SK-N-SH (cell line): ENCODE measurements at regions of chr6 and their contacts with region 1.

Region 1: DNA sequence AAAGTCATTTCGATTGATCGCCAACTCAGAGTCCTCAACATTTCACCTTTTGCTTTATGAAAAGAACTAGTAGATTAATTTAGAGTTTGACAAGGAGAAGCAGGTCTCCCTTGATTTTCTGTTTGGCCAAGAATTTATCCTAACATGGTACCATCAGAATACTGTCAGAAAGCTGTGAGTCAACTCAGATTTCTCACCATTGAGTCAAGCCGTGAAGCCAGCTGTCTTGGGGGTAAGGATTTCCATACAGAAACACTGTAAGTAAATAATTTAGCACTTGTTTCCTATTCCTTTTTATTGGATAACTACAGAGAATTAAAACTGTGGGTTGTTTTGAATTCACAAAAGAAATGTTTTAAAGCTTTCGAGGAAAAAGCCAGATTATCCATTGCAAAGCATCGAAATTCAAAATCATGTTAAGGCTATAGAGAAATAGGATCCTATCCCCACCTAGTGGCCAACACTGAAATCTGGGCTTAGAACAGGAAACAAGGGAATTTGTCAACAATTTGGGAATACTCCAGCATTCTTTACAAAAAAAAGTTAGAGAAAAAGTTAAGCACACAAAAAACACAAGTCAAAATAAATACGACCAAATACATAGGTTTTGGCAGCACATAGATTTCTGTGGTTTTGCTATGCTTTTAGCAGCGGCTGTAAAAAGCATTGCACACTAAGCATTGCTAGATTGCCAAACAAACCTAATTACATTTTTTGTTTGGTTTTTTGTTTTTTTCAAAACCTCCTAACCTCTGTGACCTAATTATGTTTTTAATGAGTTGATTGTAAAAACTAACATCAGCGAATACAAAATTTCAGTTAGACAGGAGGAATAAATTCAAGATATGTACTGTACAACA is 44.2 kb downstream of the COL11A2 start:
- DNase-seq: peak; percentile 63
- H3K4me3 ChIP-seq: no peak overlapping the region
- H3K27ac ChIP-seq: no peak overlapping the region
- H3K4me1 ChIP-seq: no peaks in the 10 kb centered on the region
- H3K27me3 ChIP-seq: peaks cover 30% of the 10 kb centered on the region
- CTCF ChIP-seq: peak; percentile 92
- EP300 ChIP-seq: no peak
- RAD21 ChIP-seq: peak; percentile 77

Region 2: GRCh38 chr6:33014841-33015634 is 133.0 kb before region 1 on chr6:
- CTCF ChIA-PET with region 1: interaction called, 65 read pairs
- POLR2A ChIA-PET with region 1: no interaction called
- DNase-seq: peak; percentile 71
- H3K4me3 ChIP-seq: no peak overlapping the region; a peak in 1 of 4 replicates
- H3K27ac ChIP-seq: no peak overlapping the region
- H3K4me1 ChIP-seq: no peaks in the 10 kb centered on the region; a peak in 1 of 4 replicates
- H3K27me3 ChIP-seq: peaks cover 72% of the 10 kb centered on the region
- CTCF ChIP-seq: peak; percentile 75
- EP300 ChIP-seq: no peak
- RAD21 ChIP-seq: peak; percentile 78

Region 3: GRCh38 chr6:33118525-33119123 is 29.4 kb before region 1 on chr6:
- CTCF ChIA-PET with region 1: interaction called, 68 read pairs
- POLR2A ChIA-PET with region 1: no interaction called
- DNase-seq: peak; percentile 46
- H3K4me3 ChIP-seq: peak overlapping the region in 1 of 2 experiments; percentile 43; a peak in 1 of 4 replicates
- H3K27ac ChIP-seq: no peak overlapping the region
- H3K4me1 ChIP-seq: no peaks in the 10 kb centered on the region; a peak in 1 of 4 replicates
- H3K27me3 ChIP-seq: peaks cover 42% of the 10 kb centered on the region; the same call in 1 of the 2 replicates
- CTCF ChIP-seq: peak; percentile 88
- EP300 ChIP-seq: no peak
- RAD21 ChIP-seq: peak; percentile 68

Region 4: GRCh38 chr6:33126101-33126714 is 21.8 kb before region 1 on chr6:
- CTCF ChIA-PET with region 1: interaction called, 68 read pairs
- POLR2A ChIA-PET with region 1: no interaction called
- DNase-seq: peak; percentile 51
- H3K4me3 ChIP-seq: no peak overlapping the region; a peak in 1 of 4 replicates
- H3K27ac ChIP-seq: no peak overlapping the region
- H3K4me1 ChIP-seq: no peaks in the 10 kb centered on the region
- H3K27me3 ChIP-seq: peaks cover 39% of the 10 kb centered on the region; the same call in 1 of the 2 replicates
- CTCF ChIP-seq: peak; percentile 56
- EP300 ChIP-seq: no peak
- RAD21 ChIP-seq: no peak

Region 5: GRCh38 chr6:33132081-33132524 is 15.9 kb before region 1 on chr6:
- CTCF ChIA-PET with region 1: interaction called, 35 read pairs
- POLR2A ChIA-PET with region 1: no interaction called
- DNase-seq: no peak
- H3K4me3 ChIP-seq: no peak overlapping the region
- H3K27ac ChIP-seq: no peak overlapping the region
- H3K4me1 ChIP-seq: no peaks in the 10 kb centered on the region
- H3K27me3 ChIP-seq: peaks cover 44% of the 10 kb centered on the region; the same call in 1 of the 2 replicates
- CTCF ChIP-seq: no peak
- EP300 ChIP-seq: no peak
- RAD21 ChIP-seq: no peak

Region 6: GRCh38 chr6:33161354-33162331 is 13.6 kb after region 1 on chr6:
- CTCF ChIA-PET with region 1: interaction called, 22 read pairs
- POLR2A ChIA-PET with region 1: no interaction called
- DNase-seq: peak; percentile 93
- H3K4me3 ChIP-seq: peak overlapping the region; percentile 44 to 57
- H3K27ac ChIP-seq: no peak overlapping the region
- H3K4me1 ChIP-seq: peaks cover 0 to 7% of the 10 kb centered on the region in 2 experiments; a peak in 1 of 4 replicates
- H3K27me3 ChIP-seq: no peaks in the 10 kb centered on the region; the same call in 1 of the 2 replicates
- CTCF ChIP-seq: peak; percentile 85
- EP300 ChIP-seq: no peak
- RAD21 ChIP-seq: peak; percentile 68

Region 7: DNA sequence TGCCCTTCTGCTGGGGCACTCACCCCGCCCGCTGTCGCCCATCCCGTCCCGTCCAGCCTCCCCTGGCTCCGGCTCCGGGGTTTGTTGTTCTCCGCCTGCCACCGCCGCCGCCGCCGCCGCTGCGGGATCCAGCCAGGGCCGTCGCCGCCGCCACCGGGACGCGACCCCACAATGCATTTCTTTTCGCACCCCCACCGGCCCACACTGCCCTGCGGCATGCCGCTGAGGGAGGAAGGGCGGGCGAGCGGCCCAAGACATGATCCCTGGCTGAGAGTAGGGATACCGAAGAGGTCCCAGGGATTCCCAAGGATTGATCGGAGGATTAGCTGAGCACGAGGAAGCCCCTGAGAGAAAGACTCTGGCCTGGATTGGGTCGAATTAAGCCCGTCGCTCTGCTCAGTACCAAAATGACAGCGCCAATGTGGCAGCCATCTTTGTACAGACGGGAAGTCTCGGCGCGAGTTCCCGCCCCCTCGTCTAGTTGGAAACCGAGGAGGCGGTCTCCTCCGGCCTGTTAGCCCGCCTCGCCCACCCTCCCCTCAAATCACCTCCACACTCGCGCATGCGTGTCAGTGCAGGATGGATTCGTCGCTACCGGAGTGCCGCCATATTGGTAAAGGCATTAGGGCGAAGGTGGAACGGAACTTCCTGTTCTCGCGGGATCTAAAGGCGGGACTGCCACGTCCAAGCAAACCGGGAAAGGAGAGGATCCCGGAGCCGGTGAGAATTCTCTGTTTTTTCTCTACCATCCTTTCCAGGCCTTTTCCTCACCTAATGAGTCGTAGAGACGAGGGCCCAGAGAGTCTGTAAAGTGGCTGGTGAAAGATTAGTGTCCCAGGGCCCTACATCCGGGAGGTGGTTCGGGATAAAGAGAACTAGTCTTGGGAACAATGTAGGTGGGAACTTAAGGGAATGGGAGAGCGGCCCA is 52.4 kb after region 1 on chr6 and contains the starts of genes RXRB and SLC39A7:
- CTCF ChIA-PET with region 1: interaction called, 14 read pairs
- POLR2A ChIA-PET with region 1: no interaction called
- DNase-seq: peak; percentile 96
- H3K4me3 ChIP-seq: peak within 1 kb of the TSS; percentile 82 to 97
- H3K27ac ChIP-seq: peak within 1 kb of the TSS; percentile 97 to 99
- H3K4me1 ChIP-seq: peaks cover 17 to 41% of the 10 kb centered on the region in 2 experiments; a peak in 3 of 4 replicates
- H3K27me3 ChIP-seq: no peaks in the 10 kb centered on the region
- CTCF ChIP-seq: no peak
- EP300 ChIP-seq: no peak
- RAD21 ChIP-seq: no peak
- polyA plus RNA-seq, gene RXRB: 45.8 and 61.0 TPM in 2 replicates
- polyA plus RNA-seq, gene SLC39A7: 129 and 138 TPM in 2 replicates